ENCODE measurements at regions of chr10 and their contacts with region 1.

Region 1: DNA sequence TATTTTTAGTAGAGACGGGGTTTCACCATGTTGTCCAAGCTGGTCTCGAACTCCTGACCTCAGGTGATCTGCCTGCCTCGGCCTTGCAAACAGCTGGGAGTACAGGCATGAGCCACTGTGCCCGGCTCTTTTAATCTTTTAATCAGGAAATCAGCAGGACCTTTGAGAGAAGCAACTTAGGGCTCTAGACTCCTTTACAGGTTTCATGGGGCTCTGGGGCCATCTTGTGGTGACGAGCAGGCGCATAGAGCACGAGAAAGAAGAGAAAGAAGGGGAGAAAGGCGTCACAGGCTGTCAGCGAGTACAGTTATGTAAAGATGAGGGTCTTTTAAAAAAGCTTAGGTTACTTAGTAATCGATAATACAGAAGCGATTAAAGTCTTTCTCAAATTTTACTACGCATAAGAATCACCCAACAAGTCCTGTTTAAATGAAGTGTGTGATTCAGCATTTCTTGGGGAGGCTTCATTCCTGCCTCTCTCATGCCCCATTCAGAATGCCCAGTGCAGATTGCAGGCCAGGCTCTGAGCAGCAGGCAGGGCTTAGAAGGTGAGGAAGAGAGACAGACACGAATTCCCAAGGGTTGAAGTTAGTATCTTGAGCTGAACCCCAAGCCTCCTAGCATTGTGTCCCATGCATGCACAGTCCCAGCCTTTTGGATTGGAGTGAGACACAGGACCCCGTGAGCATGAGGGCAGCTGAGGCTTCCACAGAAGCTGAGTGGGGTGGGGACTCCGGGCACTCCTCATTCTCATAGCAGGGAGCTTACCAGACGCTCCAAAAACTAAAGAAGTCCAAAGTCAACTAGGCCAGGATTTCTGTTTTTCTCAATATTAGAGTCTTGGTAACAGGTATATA is 23.6 kb upstream of the PFKP start:
- DNase-seq: peak; percentile 75
- ATAC-seq: peak; percentile 85

Region 2: DNA sequence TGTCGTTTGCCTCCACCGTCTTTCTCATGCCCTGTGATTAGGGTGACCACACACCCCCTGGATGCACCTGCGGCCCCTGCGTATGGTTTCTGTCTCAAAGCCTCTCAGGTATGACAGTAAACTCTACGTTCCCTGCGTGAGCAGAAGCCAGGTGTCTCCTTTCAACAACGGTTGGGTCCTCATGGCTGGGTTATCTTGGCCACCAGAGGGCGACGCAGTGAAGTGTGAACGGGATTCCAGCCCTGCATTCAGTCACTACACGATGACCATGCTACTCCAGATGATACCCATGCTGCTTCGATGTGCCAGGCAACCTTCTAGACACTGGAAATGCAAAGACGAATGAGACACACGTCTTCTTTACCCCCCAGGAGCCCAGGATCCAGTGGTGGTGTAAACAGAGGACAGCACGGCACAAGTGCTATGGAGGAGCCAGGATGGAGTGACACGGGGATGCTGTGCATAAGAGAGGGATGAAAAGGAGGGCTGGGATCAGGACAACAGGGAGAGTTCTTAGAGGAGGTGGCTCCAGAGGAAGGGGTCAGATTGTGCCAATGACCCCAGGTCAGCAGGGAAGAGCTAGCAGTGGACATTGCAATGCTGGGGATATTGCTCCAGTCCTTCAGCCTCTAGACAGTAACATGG is 204.5 kb before region 1 on chr10:
- intact Hi-C with region 1: loop called (anchors 5 kb)
- DNase-seq: peak; percentile 53
- ATAC-seq: no peak

Region 3: GRCh38 chr10:2927958-2928840 is 115.5 kb before region 1 on chr10:
- intact Hi-C with region 1: loop called (anchors 5 kb)
- DNase-seq: peak; percentile 53
- ATAC-seq: peak; percentile 83

Region 4: GRCh38 chr10:2968401-2969058 is 75.2 kb before region 1 on chr10:
- intact Hi-C with region 1: no loop called
- DNase-seq: no peak
- ATAC-seq: no peak